GM12878 (cell line): ENCODE measurements at regions of chr19 and their contacts with region 1.

Region 1: DNA sequence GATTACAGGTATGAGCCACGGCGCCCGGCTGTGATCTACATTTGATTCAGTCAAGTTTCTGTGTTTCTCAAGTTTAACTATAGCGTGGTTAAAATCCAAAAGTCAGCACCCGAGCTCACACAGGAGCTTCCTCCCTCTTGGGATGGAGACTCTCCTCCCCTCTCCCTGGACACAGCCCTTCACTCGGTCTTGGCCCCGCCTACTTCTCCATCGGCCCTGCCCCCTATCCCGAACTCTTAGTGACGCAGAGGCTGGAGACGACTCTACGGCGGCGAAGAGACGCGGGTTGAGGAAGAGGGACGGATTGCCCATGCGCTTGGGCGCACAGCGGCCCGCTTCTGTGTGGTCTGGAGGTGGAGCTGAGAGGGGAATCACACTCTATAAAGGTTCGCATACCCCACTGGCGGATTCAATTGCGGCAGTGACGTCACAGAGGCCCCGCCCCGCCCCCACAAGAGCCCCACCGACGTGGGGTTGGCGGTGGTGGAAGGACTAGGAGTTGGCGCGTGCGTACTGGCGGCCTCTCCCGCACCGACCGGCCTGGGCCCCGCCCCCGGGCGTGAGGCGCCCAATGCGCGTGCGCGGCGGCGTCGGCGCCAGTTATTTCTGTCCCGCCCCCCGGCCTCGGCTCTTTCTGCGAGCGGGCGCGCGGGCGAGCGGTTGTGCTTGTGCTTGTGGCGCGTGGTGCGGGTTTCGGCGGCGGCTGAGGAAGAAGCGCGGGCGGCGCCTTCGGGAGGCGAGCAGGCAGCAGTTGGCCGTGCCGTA is at the start of gene TRIM28:
- DNase-seq: peak; percentile 96
- ATAC-seq: peak; percentile 99
- H3K4me3 ChIP-seq: peak within 1 kb of the TSS; percentile 92
- H3K27ac ChIP-seq: peak within 1 kb of the TSS; percentile 89
- H3K4me1 ChIP-seq: peaks cover 8% of the 10 kb centered on the region
- H3K27me3 ChIP-seq: no peaks in the 10 kb centered on the region; a peak in 1 of 4 replicates
- CTCF ChIP-seq: no peak
- EP300 ChIP-seq: peak in 1 of 2 experiments; percentile 39; a peak in 1 of 4 replicates
- POLR2A ChIP-seq: peak; percentile 99
- RAD21 ChIP-seq: no peak
- polyA plus RNA-seq, gene TRIM28: 5.0 to 32.5 TPM

Region 2: DNA sequence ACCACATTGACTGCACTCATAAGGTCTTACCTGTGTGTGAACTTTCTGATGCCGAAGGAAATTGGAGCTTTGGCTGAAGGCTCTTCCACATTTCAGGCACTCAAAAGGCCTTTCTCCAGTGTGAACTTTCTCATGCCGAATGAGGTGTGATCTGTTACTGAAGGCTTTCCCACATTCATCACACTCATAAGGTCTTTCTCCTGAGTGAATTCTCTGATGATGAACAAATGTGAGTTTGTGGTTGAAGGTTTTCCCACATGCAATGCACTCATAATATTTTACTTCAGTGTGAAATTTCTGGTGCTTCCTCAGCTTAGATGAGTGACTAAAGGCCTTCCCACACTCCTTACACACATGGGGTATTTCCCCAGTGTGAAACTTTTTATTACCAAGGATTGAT is 109.8 kb before region 1 on chr19:
- CTCF ChIA-PET with region 1: no interaction called
- POLR2A ChIA-PET with region 1: no interaction called
- RAD21 ChIA-PET with region 1: no interaction called
- SMC1A ChIA-PET with region 1: no interaction called
- in situ Hi-C with region 1: no loop called
- intact Hi-C with region 1: no loop called
- DNase-seq: no peak
- ATAC-seq: no peak
- H3K4me3 ChIP-seq: no peak overlapping the region
- H3K27ac ChIP-seq: no peak overlapping the region
- H3K4me1 ChIP-seq: peaks cover 3% of the 10 kb centered on the region; the same call in 1 of the 2 replicates
- H3K27me3 ChIP-seq: no peaks in the 10 kb centered on the region
- CTCF ChIP-seq: no peak
- EP300 ChIP-seq: no peak
- POLR2A ChIP-seq: no peak
- RAD21 ChIP-seq: no peak

Region 3: GRCh38 chr19:58572818-58573657 is 29.0 kb after region 1 on chr19 and contains the start of gene MZF1:
- CTCF ChIA-PET with region 1: interaction called, 7 read pairs
- POLR2A ChIA-PET with region 1: interaction called, 13 read pairs
- RAD21 ChIA-PET with region 1: interaction called, 4 read pairs
- SMC1A ChIA-PET with region 1: interaction called, 7 read pairs
- in situ Hi-C with region 1: no loop called
- intact Hi-C with region 1: loop called (anchors 2 kb)
- DNase-seq: peak; percentile 99
- ATAC-seq: peak; percentile 73
- H3K4me3 ChIP-seq: peak within 1 kb of the TSS; percentile 82
- H3K27ac ChIP-seq: peak within 1 kb of the TSS; percentile 98
- H3K4me1 ChIP-seq: peaks cover 12% of the 10 kb centered on the region
- H3K27me3 ChIP-seq: no peaks in the 10 kb centered on the region
- CTCF ChIP-seq: 0 out of 6 replicates have a peak, but pooled peaks of 2 of the 3 experiments have one; percentile 10 to 16
- EP300 ChIP-seq: peak in 1 of 2 experiments; percentile 41; a peak in 2 of 4 replicates
- POLR2A ChIP-seq: peak; percentile 84
- RAD21 ChIP-seq: no peak
- polyA plus RNA-seq, gene MZF1: 0.38 to 0.64 TPM

Region 4: DNA sequence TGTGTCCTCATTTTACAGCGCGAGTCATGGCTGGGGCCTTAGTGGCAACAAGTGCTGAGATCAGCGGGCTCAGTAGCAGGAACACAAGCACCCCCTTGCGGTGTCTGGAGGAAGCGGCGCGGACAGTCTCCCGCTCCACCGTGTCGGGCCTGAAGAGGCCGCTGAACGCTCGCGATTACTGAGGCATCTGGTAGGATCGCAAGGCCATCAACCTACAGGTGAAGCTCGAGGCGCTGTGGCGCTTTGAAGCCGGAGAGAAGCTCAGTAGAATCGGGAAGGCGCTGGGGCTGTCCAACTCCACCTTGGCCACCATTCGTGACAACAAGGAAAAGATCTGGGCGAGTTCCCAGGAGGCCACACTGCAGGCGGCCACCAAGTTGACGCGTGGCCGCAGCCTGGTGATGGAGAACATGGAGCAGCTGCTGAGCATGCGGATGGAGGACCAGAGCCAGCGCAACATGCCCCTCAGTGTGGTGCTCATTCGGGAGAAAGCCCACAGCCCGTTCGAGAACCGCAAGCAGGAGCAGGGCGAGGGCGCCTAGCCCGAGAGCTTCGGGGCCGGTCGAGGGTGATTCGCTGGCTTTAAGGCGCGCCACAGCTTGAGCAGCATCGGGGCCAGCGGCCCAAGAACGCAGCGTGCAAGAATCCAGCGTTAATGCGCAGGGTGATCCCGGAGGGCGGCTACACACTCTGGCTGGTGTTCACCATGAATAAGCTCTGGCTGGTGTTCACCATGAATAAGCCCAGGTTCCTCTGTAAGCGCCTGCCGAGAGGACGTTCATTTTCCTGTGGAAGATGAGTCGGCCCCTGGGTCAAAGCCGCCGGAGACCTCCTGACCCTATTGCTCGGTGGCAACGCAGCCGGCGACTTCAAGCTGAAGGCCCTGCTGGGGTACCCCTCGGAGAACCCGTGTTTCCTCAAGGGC is 37.5 kb after region 1 on chr19:
- CTCF ChIA-PET with region 1: interaction called, 7 read pairs
- POLR2A ChIA-PET with region 1: interaction called, 13 read pairs
- RAD21 ChIA-PET with region 1: no interaction called
- SMC1A ChIA-PET with region 1: interaction called, 4 read pairs
- in situ Hi-C with region 1: no loop called
- intact Hi-C with region 1: no loop called
- DNase-seq: no peak
- ATAC-seq: peak; percentile 91
- H3K4me3 ChIP-seq: no peak overlapping the region
- H3K27ac ChIP-seq: no peak overlapping the region
- H3K4me1 ChIP-seq: peaks cover 20% of the 10 kb centered on the region
- H3K27me3 ChIP-seq: no peaks in the 10 kb centered on the region
- CTCF ChIP-seq: peak; percentile 70 to 99 (median 87)
- EP300 ChIP-seq: no peak
- POLR2A ChIP-seq: no peak
- RAD21 ChIP-seq: no peak